ENCODE measurements at regions of chr12 and their contacts with region 1.

Region 1: DNA sequence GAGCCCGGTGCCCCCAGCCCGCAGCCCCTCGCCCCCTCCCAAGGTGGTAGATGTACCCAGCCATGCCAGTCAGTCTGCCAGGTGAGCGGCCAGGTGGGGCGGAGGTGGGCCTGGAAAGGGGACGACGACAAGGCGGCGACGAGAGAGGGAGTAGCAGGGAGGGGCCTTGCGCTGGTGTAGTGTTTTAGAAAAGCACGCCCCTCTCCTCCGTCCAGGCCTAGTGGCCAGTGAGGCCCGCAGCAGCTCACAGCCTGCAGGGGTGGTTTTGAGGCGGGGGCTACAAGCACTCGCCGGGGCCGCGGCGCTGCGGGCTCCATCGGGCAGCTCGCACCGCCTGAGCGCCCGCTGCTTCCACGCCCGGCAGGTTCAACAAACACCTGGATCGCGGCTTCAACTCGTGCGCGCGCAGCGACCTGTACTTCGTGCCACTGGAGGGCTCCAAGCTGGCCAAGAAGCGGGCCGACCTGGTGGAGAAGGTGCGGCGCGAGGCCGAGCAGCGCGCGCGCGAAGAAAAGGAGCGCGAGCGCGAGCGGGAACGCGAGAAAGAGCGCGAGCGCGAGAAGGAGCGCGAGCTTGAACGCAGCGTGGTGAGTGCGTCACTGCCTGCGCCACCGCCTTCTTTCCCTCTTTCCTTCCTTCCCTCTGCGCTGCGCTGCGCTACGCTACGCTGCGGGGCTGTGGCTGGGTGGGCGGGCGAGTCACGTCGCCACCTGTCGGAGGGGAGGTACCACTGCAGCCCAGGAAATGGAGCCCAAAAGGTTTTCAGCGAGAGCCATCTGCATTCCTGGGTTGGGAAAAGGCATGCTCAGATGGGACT is 5.9 kb upstream of the RNU7-1 start:
- DNase-seq: peak; percentile 87
- CTCF ChIP-seq: peak; percentile 98

Region 2: GRCh38 chr12:6904280-6905278 is 33.1 kb before region 1 on chr12 and contains the start of gene LRRC23:
- CTCF ChIA-PET with region 1: interaction called, 12 read pairs
- POLR2A ChIA-PET with region 1: no interaction called
- DNase-seq: peak; percentile 95
- CTCF ChIP-seq: no peak

Region 3: DNA sequence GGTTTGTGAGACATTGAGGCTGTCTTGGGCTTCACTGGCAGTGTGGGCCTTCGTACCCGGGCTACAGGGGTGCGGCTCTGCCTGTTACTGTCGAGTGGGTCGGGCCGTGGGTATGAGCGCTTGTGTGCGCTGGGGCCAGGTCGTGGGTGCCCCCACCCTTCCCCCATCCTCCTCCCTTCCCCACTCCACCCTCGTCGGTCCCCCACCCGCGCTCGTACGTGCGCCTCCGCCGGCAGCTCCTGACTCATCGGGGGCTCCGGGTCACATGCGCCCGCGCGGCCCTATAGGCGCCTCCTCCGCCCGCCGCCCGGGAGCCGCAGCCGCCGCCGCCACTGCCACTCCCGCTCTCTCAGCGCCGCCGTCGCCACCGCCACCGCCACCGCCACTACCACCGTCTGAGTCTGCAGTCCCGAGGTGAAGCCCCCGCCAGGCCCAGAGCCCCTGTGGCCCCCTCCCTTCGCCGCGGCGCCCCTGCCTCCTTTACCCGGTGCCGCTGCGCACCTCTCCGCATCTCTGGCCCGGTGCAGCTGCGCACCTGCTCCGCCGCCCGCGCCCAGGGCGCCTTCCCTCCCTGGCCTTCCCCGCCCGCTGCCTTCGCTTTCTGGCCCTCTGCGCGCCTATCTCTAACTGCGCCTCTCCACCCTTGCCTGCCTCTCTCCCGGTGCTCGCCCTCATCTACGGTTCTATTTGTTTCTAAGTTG is 23.3 kb before region 1 on chr12 and contains the start of gene ENO2:
- CTCF ChIA-PET with region 1: interaction called, 14 read pairs
- POLR2A ChIA-PET with region 1: no interaction called
- DNase-seq: peak; percentile 89
- CTCF ChIP-seq: no peak

Region 4: DNA sequence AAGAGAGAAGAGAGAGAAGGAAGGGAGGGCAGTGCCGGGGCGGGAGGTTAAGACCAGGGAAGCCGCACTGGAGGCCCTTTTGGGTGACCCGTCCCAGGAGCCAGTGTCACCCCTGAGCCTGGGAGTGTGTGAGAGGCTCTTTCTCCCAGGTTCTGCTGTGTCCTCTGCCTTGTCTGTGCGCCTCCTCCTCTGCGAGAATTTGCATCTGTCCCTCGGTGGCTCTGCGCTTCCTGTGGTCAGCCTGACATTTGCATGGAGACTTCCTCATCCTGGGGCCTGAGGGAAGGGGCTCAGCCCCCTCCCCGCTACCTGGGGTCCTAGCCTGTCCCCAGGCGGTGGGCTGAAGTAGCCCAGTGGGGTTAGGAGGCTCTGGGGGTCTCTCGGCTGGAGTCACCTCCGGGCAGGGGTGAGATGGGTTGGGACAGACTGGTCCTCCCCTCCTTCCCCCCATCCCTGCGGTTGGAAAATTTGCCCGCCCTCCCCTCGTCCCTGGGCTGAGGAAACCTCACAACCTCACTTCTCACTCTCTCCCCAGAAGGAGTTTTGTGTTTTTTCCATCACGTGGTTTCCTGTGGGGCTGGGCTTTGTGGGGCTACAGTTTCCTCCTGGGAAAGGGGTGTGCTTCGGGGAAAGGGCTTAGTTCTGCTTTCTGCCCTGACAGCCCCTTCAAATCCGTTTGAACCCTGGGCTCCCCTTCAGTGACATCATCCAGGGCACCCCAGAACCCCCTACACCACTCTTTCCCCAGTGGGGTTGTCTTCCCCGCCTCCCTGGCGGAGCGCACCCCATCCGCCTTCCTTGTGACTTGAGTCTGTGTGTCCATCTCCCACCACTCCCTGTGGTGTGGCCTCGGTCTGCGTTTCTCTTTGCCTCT is 16.0 kb after region 1 on chr12:
- CTCF ChIA-PET with region 1: interaction called, 530 read pairs
- POLR2A ChIA-PET with region 1: interaction called, 147 read pairs
- DNase-seq: peak; percentile 80
- CTCF ChIP-seq: no peak

Region 5: GRCh38 chr12:7031306-7031705 is 93.6 kb after region 1 on chr12:
- CTCF ChIA-PET with region 1: no interaction called
- POLR2A ChIA-PET with region 1: no interaction called
- DNase-seq: no peak
- CTCF ChIP-seq: no peak

Measured in GM10248 (cell line).